ENCODE measurements at regions of chr6 and their contacts with region 1.

Region 1: GRCh38 chr6:32153564-32154513 is at the start of gene PPT2:
- DNase-seq: no peak
- ATAC-seq: peak; percentile 79
- H3K4me3 ChIP-seq: peak within 1 kb of the TSS; percentile 94
- H3K27ac ChIP-seq: peak within 1 kb of the TSS; percentile 11; the same call in 1 of the 2 replicates
- H3K4me1 ChIP-seq: peaks cover 3% of the 10 kb centered on the region; the same call in 1 of the 2 replicates
- H3K27me3 ChIP-seq: peaks cover 0 to 8% of the 10 kb centered on the region in 2 experiments
- CTCF ChIP-seq: no peak
- EP300 ChIP-seq: no peak
- POLR2A ChIP-seq: no peak
- RAD21 ChIP-seq: no peak
- polyA plus RNA-seq, gene PPT2: 1.3 to 2.5 TPM

Region 2: DNA sequence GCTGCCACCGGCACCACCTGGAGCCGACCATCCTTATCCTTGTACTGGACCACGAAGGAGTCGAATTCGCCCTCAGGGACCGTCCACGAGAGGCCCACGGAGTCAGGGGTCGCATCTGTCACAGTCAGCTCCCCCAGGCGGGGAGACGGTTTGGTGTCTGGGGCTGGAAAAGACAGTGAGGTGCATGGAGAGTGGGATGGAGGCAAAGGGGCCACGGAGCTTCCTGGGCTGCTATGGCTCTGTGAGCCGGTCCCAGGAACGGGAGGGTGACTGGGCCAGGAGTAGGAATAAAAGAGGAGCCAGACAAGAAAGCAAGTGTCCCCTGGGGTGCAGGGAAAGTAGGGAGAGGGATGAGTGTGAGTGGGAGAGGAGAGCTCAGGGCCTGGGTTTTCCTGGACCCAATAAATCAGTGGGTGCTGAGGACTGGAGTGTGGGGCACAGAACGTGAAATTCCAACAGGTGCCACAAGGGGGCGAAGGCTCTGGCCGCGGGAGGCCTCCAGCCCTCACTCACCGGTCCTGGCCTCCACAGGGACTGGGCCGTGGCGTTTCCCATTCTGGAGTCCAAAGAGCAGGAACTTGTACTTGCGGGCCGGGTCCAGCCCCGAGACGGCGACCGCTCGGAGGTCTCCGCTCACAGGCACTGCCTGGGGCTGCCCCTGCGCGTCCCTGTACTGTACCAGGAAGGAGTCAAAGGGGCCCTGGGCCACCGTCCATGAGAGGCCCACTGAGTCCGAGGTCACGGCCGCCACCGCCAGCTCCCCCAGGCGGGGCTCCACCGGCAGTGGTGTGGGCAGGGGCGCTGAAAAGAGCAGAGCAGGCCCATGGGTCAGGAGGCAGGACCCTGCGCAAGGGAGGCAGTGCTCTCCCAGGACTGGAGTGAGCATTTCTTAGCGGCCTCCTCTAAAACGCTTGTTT is 105.7 kb before region 1 on chr6:
- CTCF ChIA-PET with region 1: interaction called, 3 read pairs
- POLR2A ChIA-PET with region 1: no interaction called
- RAD21 ChIA-PET with region 1: no interaction called
- SMC1A ChIA-PET with region 1: no interaction called
- in situ Hi-C with region 1: no loop called
- intact Hi-C with region 1: loop called (anchors 10 kb)
- DNase-seq: no peak
- ATAC-seq: peak; percentile 96
- H3K4me3 ChIP-seq: no peak overlapping the region
- H3K27ac ChIP-seq: no peak overlapping the region
- H3K4me1 ChIP-seq: no peaks in the 10 kb centered on the region
- H3K27me3 ChIP-seq: peaks cover 0 to 3% of the 10 kb centered on the region in 2 experiments; a peak in 2 of 4 replicates
- CTCF ChIP-seq: peak; percentile 78 to 90 (median 81)
- EP300 ChIP-seq: no peak
- POLR2A ChIP-seq: no peak
- RAD21 ChIP-seq: peak; percentile 38; the same call in 1 of the 2 replicates

Region 3: GRCh38 chr6:32087574-32088486 is 66.0 kb before region 1 on chr6:
- CTCF ChIA-PET with region 1: interaction called, 3 read pairs
- POLR2A ChIA-PET with region 1: no interaction called
- RAD21 ChIA-PET with region 1: no interaction called
- SMC1A ChIA-PET with region 1: no interaction called
- in situ Hi-C with region 1: no loop called
- intact Hi-C with region 1: loop called (anchors 2 kb)
- DNase-seq: no peak
- ATAC-seq: peak; percentile 86
- H3K4me3 ChIP-seq: no peak overlapping the region
- H3K27ac ChIP-seq: no peak overlapping the region
- H3K4me1 ChIP-seq: peaks cover 16% of the 10 kb centered on the region
- H3K27me3 ChIP-seq: peaks cover 2 to 4% of the 10 kb centered on the region in 2 experiments
- CTCF ChIP-seq: peak; percentile 15 to 65 (median 57); a peak in 5 of 6 replicates
- EP300 ChIP-seq: no peak
- POLR2A ChIP-seq: no peak
- RAD21 ChIP-seq: peak; percentile 48

Region 4: GRCh38 chr6:32118782-32119628 is 34.8 kb before region 1 on chr6:
- CTCF ChIA-PET with region 1: interaction called, 15 read pairs
- POLR2A ChIA-PET with region 1: no interaction called
- RAD21 ChIA-PET with region 1: interaction called, 5 read pairs
- SMC1A ChIA-PET with region 1: interaction called, 4 read pairs
- in situ Hi-C with region 1: no loop called
- intact Hi-C with region 1: loop called (anchors 2 kb)
- DNase-seq: peak; percentile 24
- ATAC-seq: peak; percentile 99
- H3K4me3 ChIP-seq: no peak overlapping the region
- H3K27ac ChIP-seq: no peak overlapping the region
- H3K4me1 ChIP-seq: no peaks in the 10 kb centered on the region
- H3K27me3 ChIP-seq: no peaks in the 10 kb centered on the region
- CTCF ChIP-seq: peak; percentile 93 to 96 (median 95)
- EP300 ChIP-seq: no peak
- POLR2A ChIP-seq: no peak; the same call in 1 of the 2 replicates
- RAD21 ChIP-seq: peak; percentile 73

Region 5: DNA sequence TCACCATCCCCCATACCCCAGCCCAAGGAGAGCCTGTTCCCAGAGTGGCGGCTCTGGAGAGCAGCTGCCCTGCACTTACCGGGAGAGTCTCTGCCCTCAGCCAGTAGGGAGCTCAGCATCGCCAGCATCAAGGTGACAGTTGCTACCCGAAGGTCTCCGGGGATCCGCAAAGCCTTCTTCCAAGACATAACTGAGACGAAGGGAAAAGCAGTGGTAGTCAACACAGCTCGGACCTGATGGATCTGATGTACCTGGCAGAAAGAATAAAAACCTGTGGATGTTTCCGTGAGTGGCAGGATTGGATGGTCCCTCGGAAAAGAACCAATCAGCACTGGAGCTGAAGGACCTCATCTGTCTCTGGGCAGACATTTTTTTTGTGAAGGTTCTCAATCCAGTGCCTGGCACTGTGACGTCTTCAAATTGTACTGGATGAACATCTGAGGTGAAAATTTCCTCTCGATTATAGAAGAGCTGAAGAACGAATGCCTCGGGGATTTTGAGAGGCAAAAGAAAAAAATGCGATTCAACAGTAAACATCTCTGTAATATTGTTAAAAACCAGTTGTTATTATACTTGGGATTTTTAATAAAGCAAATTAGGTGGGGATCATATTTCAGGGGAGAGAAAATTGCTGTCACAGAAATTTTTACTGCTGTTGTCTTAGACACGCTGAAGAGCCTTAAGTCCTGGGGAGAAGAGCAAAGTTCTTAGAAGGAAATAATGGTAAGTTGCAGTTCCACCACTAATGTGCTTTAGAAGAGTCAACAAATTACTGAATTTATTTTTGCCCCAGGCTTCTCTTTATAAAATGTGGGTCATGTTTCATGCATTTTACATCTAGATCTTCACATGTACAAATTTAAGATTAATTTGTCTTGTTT is 512.8 kb after region 1 on chr6 and contains the start of gene HLA-DQB1:
- CTCF ChIA-PET with region 1: no interaction called
- POLR2A ChIA-PET with region 1: no interaction called
- RAD21 ChIA-PET with region 1: no interaction called
- SMC1A ChIA-PET with region 1: no interaction called
- in situ Hi-C with region 1: no loop called
- intact Hi-C with region 1: no loop called
- DNase-seq: peak; percentile 77
- ATAC-seq: peak; percentile 70
- H3K4me3 ChIP-seq: peak within 1 kb of the TSS; percentile 55; the same call in 1 of the 2 replicates
- H3K27ac ChIP-seq: peak within 1 kb of the TSS; percentile 92
- H3K4me1 ChIP-seq: peaks cover 22% of the 10 kb centered on the region
- H3K27me3 ChIP-seq: no peaks in the 10 kb centered on the region
- CTCF ChIP-seq: no peak
- EP300 ChIP-seq: no peak
- POLR2A ChIP-seq: peak; percentile 72
- RAD21 ChIP-seq: no peak
- polyA plus RNA-seq, gene HLA-DQB1: 38.1 to 66.1 TPM